WTC11 (cell line): ENCODE measurements at regions of chr2 and their contacts with region 1.

Region 1: GRCh38 chr2:20642055-20642971 is 8.6 kb downstream of the HS1BP3 start:
- DNase-seq: peak; percentile 80
- ATAC-seq: peak; percentile 97
- H3K4me3 Mint-ChIP-seq: no peak overlapping the region
- H3K27ac Mint-ChIP-seq: no peak overlapping the region
- H3K4me1 Mint-ChIP-seq: no peaks in the 10 kb centered on the region
- H3K27me3 Mint-ChIP-seq: no peaks in the 10 kb centered on the region
- CTCF ChIP-seq: peak; percentile 93

Region 2: DNA sequence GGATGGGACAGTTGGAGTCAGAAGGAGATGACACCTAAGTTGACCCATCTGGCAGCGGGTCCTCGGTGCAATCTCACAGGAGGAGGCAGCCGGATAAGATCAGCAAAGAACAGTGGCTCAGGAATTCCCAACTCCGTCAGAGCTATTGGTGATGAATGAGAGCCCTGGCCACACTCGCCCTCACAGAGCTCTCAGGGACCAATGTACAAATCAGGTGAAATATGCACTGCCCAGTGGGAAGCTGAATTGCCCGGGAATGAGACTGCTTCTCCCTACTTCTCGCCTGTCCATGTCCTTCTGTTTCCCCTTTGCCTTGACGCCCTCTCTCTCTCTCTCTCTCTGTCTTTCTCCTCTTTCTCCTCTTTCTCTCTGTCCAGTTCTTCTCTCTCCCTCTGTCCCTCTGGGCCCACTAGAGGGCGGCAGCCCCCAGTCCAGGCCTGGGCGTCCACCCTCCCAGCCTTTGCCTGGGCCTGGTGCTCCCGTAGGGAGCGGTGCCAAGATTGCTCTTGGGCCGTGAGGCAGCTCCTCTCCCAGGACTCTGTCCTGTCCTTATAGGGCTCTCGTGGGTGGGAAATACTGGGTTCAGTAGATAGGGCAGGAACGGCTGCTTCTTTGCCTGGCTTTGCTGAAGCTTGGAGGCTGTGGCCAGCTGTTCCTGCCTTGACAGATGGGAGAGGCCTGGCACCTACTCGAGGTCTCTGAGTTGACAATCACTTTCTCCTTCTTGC is 263.4 kb before region 1 on chr2:
- CTCF ChIA-PET with region 1: interaction called, 21 read pairs
- POLR2A ChIA-PET with region 1: no interaction called
- DNase-seq: peak; percentile 81
- ATAC-seq: peak; percentile 97
- H3K4me3 Mint-ChIP-seq: no peak overlapping the region
- H3K27ac Mint-ChIP-seq: no peak overlapping the region
- H3K4me1 Mint-ChIP-seq: peaks cover 27% of the 10 kb centered on the region
- H3K27me3 Mint-ChIP-seq: peaks cover 4% of the 10 kb centered on the region; the same call in 1 of the 2 replicates
- CTCF ChIP-seq: peak; percentile 64

Region 3: DNA sequence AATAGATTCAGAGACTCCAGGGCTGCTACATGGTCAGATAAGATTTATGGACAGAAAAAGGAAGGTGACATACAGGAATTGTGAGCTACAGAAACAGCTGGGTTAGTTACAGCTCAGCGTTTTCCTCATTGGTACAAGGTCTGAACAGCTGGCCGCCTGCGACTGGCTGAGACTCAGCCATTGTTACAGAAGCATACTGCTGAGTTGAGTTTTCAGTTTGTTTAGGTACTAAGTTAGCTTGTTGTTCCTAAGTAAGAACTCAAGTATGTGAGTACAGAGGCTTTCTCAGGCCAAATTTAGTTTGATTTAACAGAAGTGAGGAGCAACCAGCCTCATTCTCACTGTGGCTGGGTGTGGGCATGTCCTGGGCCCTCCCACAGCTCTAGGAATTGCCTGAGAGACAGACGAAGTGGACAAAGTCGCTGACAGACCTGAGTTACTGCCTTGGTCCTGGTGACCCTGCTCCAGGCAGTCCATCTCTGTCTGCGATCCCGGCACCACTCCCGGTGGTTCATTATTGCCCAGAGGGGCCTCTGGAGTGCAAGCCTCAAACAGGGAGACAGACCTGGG is 223.2 kb before region 1 on chr2:
- CTCF ChIA-PET with region 1: interaction called, 17 read pairs
- POLR2A ChIA-PET with region 1: no interaction called
- DNase-seq: no peak
- ATAC-seq: peak; percentile 29
- H3K4me3 Mint-ChIP-seq: no peak overlapping the region
- H3K27ac Mint-ChIP-seq: no peak overlapping the region
- H3K4me1 Mint-ChIP-seq: peaks cover 9% of the 10 kb centered on the region; the same call in 1 of the 2 replicates
- H3K27me3 Mint-ChIP-seq: no peaks in the 10 kb centered on the region
- CTCF ChIP-seq: no peak

Region 4: DNA sequence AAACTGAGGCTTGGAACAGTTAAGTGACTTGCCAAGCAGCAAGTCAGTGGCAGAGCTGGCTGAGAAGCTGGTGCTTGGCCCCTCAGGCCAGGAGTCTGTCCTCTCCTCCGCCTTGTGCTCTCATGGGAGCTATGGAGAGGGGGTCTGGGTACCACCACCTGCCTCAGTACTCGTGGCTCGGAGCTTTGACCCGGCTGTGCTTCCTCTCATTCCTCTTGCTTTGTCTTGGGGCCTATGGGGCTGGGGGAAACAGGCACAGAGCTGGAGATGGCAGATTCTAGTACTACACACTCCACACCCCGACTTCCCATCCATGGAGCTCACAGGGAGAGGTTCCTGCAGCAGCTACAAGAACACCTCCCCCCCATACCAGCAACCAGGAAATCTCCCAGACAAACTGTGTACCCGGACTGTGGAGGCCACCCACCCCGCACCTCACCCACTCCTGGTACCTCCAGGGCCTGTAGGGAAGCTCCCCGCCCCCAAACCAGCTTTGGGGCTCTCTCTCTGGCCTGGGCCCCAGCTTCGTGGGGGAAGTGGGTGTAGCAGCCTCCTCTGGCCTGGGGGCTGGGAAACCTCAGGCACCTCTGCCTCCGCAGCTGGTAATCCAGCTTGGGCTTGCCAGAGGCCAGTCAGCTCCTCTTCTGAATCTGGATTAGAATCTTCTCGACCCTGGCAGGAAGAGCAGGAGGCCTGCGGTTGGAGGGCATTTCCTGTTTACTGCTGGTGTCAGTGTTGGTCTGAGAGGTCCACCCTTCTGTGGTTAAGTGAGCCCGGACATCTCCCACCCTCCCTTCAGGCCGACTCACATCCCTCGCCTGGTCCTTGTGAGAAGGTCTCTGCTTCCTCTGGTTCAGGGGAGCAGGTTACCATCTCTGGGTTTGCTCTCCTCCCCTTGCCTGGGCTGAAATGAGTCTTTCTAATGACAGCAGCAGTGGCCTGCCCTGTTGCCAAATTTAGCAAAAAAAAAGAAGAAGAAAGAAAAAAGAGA is 217.7 kb before region 1 on chr2:
- CTCF ChIA-PET with region 1: interaction called, 17 read pairs
- POLR2A ChIA-PET with region 1: no interaction called
- DNase-seq: no peak
- ATAC-seq: no peak
- H3K4me3 Mint-ChIP-seq: no peak overlapping the region
- H3K27ac Mint-ChIP-seq: no peak overlapping the region
- H3K4me1 Mint-ChIP-seq: peaks cover 9% of the 10 kb centered on the region
- H3K27me3 Mint-ChIP-seq: no peaks in the 10 kb centered on the region
- CTCF ChIP-seq: no peak

Region 5: GRCh38 chr2:20595431-20596192 is 46.7 kb before region 1 on chr2:
- CTCF ChIA-PET with region 1: interaction called, 10 read pairs
- POLR2A ChIA-PET with region 1: no interaction called
- DNase-seq: peak; percentile 23
- ATAC-seq: peak; percentile 62
- H3K4me3 Mint-ChIP-seq: no peak overlapping the region
- H3K27ac Mint-ChIP-seq: peak overlapping the region; percentile 79; the same call in 1 of the 2 replicates
- H3K4me1 Mint-ChIP-seq: peaks cover 18% of the 10 kb centered on the region
- H3K27me3 Mint-ChIP-seq: no peaks in the 10 kb centered on the region
- CTCF ChIP-seq: no peak

Region 6: GRCh38 chr2:20617892-20618467 is 24.3 kb before region 1 on chr2:
- CTCF ChIA-PET with region 1: interaction called, 11 read pairs
- POLR2A ChIA-PET with region 1: no interaction called
- DNase-seq: no peak
- ATAC-seq: peak; percentile 11; the same call in 1 of the 2 replicates
- H3K4me3 Mint-ChIP-seq: no peak overlapping the region
- H3K27ac Mint-ChIP-seq: peak overlapping the region; percentile 72; the same call in 1 of the 2 replicates
- H3K4me1 Mint-ChIP-seq: peaks cover 31% of the 10 kb centered on the region
- H3K27me3 Mint-ChIP-seq: no peaks in the 10 kb centered on the region
- CTCF ChIP-seq: no peak